ENCODE measurements at regions of chr2 and their contacts with region 1.

Region 1: GRCh38 chr2:28594289-28595108 is 98.6 kb downstream of the PLB1 start:
- DNase-seq: peak; percentile 92 to 93
- H3K4me3 ChIP-seq: no peak overlapping the region
- H3K4me3 Mint-ChIP-seq: peak overlapping the region; percentile 17
- H3K27ac Mint-ChIP-seq: peak overlapping the region; percentile 100
- H3K4me1 ChIP-seq: peaks cover 41% of the 10 kb centered on the region
- H3K4me1 Mint-ChIP-seq: peaks cover 29% of the 10 kb centered on the region
- H3K27me3 ChIP-seq: no peaks in the 10 kb centered on the region
- H3K27me3 Mint-ChIP-seq: no peaks in the 10 kb centered on the region
- CTCF ChIP-seq: peak; percentile 88 to 91

Region 2: GRCh38 chr2:28566521-28567041 is 27.9 kb before region 1 on chr2:
- CTCF ChIA-PET with region 1: interaction called, 15 read pairs
- POLR2A ChIA-PET with region 1: no interaction called
- intact Hi-C with region 1: loop called (anchors 1 kb)
- DNase-seq: peak; percentile 80 to 93
- H3K4me3 ChIP-seq: peak overlapping the region; percentile 31
- H3K4me3 Mint-ChIP-seq: peak overlapping the region; percentile 76
- H3K27ac Mint-ChIP-seq: peak overlapping the region; percentile 62
- H3K4me1 ChIP-seq: peaks cover 22% of the 10 kb centered on the region
- H3K4me1 Mint-ChIP-seq: peaks cover 11% of the 10 kb centered on the region
- H3K27me3 ChIP-seq: no peaks in the 10 kb centered on the region
- H3K27me3 Mint-ChIP-seq: no peaks in the 10 kb centered on the region
- CTCF ChIP-seq: peak; percentile 99 to 100

Region 3: DNA sequence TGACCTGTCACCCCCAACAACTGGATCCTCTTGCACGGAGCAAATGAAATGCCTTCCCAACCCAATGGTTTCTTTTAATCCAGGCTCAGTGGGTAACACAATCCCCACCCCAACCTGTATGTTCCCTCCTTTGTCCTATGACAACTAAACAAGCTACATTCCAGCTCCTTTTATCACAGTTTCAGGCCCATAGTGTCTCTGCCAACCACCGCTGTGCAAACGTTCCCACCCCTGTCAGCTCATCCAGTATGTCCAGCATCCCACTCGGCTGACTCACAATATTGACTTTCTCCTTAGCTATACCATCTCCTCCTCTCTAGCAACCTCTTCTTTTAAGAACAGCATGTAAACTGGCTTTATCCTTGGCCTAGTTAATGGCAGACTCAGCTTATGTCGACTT is 39.2 kb after region 1 on chr2:
- CTCF ChIA-PET with region 1: interaction called, 10 read pairs
- POLR2A ChIA-PET with region 1: no interaction called
- intact Hi-C with region 1: loop called (anchors 1 kb)
- DNase-seq: peak; percentile 69 to 79
- H3K4me3 ChIP-seq: no peak overlapping the region
- H3K4me3 Mint-ChIP-seq: peak overlapping the region; percentile 8
- H3K27ac Mint-ChIP-seq: peak overlapping the region; percentile 68
- H3K4me1 ChIP-seq: peaks cover 34% of the 10 kb centered on the region
- H3K4me1 Mint-ChIP-seq: peaks cover 24% of the 10 kb centered on the region
- H3K27me3 ChIP-seq: no peaks in the 10 kb centered on the region
- H3K27me3 Mint-ChIP-seq: no peaks in the 10 kb centered on the region
- CTCF ChIP-seq: no peak

Region 4: GRCh38 chr2:28654978-28655320 is 60.5 kb after region 1 on chr2:
- CTCF ChIA-PET with region 1: interaction called, 6 read pairs
- POLR2A ChIA-PET with region 1: no interaction called
- intact Hi-C with region 1: loop called (anchors 1 kb)
- DNase-seq: peak; percentile 75 to 81
- H3K4me3 ChIP-seq: no peak overlapping the region
- H3K4me3 Mint-ChIP-seq: peak overlapping the region; percentile 33
- H3K27ac Mint-ChIP-seq: peak overlapping the region; percentile 75
- H3K4me1 ChIP-seq: peaks cover 52% of the 10 kb centered on the region
- H3K4me1 Mint-ChIP-seq: peaks cover 56% of the 10 kb centered on the region
- H3K27me3 ChIP-seq: no peaks in the 10 kb centered on the region
- H3K27me3 Mint-ChIP-seq: no peaks in the 10 kb centered on the region
- CTCF ChIP-seq: no peak

Region 5: GRCh38 chr2:28716265-28716867 is 121.9 kb after region 1 on chr2:
- CTCF ChIA-PET with region 1: interaction called, 3 read pairs
- POLR2A ChIA-PET with region 1: no interaction called
- intact Hi-C with region 1: loop called (anchors 1 kb)
- DNase-seq: peak in 1 of 2 experiments; percentile 43
- H3K4me3 ChIP-seq: no peak overlapping the region
- H3K4me3 Mint-ChIP-seq: no peak overlapping the region
- H3K27ac Mint-ChIP-seq: peak overlapping the region; percentile 9
- H3K4me1 ChIP-seq: peaks cover 26% of the 10 kb centered on the region
- H3K4me1 Mint-ChIP-seq: peaks cover 29% of the 10 kb centered on the region
- H3K27me3 ChIP-seq: no peaks in the 10 kb centered on the region
- H3K27me3 Mint-ChIP-seq: no peaks in the 10 kb centered on the region
- CTCF ChIP-seq: no peak

Region 6: GRCh38 chr2:28810384-28811285 is 216.1 kb after region 1 on chr2 and contains the start of gene SPDYA:
- CTCF ChIA-PET with region 1: interaction called, 3 read pairs
- POLR2A ChIA-PET with region 1: no interaction called
- intact Hi-C with region 1: loop called (anchors 1 kb)
- DNase-seq: peak; percentile 84 to 91
- H3K4me3 ChIP-seq: peak within 1 kb of the TSS; percentile 56
- H3K4me3 Mint-ChIP-seq: peak within 1 kb of the TSS; percentile 69
- H3K27ac Mint-ChIP-seq: peak within 1 kb of the TSS; percentile 5
- H3K4me1 ChIP-seq: no peaks in the 10 kb centered on the region
- H3K4me1 Mint-ChIP-seq: no peaks in the 10 kb centered on the region
- H3K27me3 ChIP-seq: no peaks in the 10 kb centered on the region
- H3K27me3 Mint-ChIP-seq: no peaks in the 10 kb centered on the region
- CTCF ChIP-seq: no peak
- total RNA-seq, gene SPDYA: 1.5 and 2.0 TPM in 2 replicates